ENCODE measurements at regions of chr13 and their contacts with region 1.

Region 1: GRCh38 chr13:36858290-36858689 is 39.3 kb downstream of the RFXAP start:
- DNase-seq: no peak
- H3K4me3 Mint-ChIP-seq: no peak overlapping the region
- H3K27ac Mint-ChIP-seq: no peak overlapping the region
- H3K4me1 Mint-ChIP-seq: no peaks in the 10 kb centered on the region
- H3K27me3 Mint-ChIP-seq: no peaks in the 10 kb centered on the region
- CTCF ChIP-seq: peak; percentile 38

Region 2: GRCh38 chr13:36965773-36966172 is 107.5 kb after region 1 on chr13:
- CTCF ChIA-PET with region 1: no interaction called
- intact Hi-C with region 1: loop called (anchors 5 kb)
- DNase-seq: peak; percentile 43
- H3K4me3 Mint-ChIP-seq: no peak overlapping the region
- H3K27ac Mint-ChIP-seq: peak overlapping the region; percentile 54
- H3K4me1 Mint-ChIP-seq: no peaks in the 10 kb centered on the region
- H3K27me3 Mint-ChIP-seq: no peaks in the 10 kb centered on the region
- CTCF ChIP-seq: no peak

Region 3: GRCh38 chr13:36981156-36981743 is 123.0 kb after region 1 on chr13:
- CTCF ChIA-PET with region 1: interaction called, 11 read pairs
- intact Hi-C with region 1: loop called (anchors 1 kb)
- DNase-seq: no peak
- H3K4me3 Mint-ChIP-seq: no peak overlapping the region
- H3K27ac Mint-ChIP-seq: no peak overlapping the region
- H3K4me1 Mint-ChIP-seq: no peaks in the 10 kb centered on the region
- H3K27me3 Mint-ChIP-seq: no peaks in the 10 kb centered on the region
- CTCF ChIP-seq: peak; percentile 16

Region 4: DNA sequence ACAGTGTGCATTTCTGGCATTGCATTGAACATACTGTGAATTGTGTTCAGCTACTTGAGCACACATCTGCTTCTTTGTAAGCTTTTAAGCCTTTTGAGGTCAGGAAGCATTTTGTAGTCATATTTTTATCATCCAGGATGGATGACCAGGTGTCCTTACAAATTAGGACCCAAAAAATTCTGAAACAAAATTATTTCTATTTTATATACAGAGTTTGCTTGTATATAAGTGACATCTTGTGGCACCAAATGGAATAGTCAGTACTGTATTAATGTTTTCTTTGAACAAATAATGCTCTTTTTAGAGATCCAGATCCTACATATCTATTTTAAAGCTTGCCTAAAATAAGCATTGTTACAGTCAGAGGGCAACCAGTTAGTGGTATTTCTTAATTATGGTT is 210.7 kb after region 1 on chr13:
- CTCF ChIA-PET with region 1: no interaction called
- intact Hi-C with region 1: loop called (anchors 2 kb)
- DNase-seq: no peak
- H3K4me3 Mint-ChIP-seq: no peak overlapping the region
- H3K27ac Mint-ChIP-seq: no peak overlapping the region
- H3K4me1 Mint-ChIP-seq: no peaks in the 10 kb centered on the region
- H3K27me3 Mint-ChIP-seq: no peaks in the 10 kb centered on the region
- CTCF ChIP-seq: no peak

Measured in Calu3 (cell line).